Activated naive CD4-positive, alpha-beta T cell treated with anti-CD3 and anti-CD28 coated beads for 36 hours (primary cell): ENCODE measurements at regions of chr12 and their contacts with region 1.

Region 1: GRCh38 chr12:95003213-95003920 is at the start of gene NDUFA12:
- DNase-seq: peak; percentile 97
- H3K4me3 Mint-ChIP-seq: peak within 1 kb of the TSS; percentile 89
- H3K27ac Mint-ChIP-seq: peak within 1 kb of the TSS; percentile 86
- H3K4me1 Mint-ChIP-seq: peaks cover 51% of the 10 kb centered on the region
- H3K27me3 Mint-ChIP-seq: no peaks in the 10 kb centered on the region
- total RNA-seq, gene NDUFA12: 147 to 160 TPM

Region 2: GRCh38 chr12:94459728-94460615 is 543.4 kb before region 1 on chr12 and contains the start of gene CEP83:
- CTCF ChIA-PET with region 1: no interaction called
- intact Hi-C with region 1: loop called (anchors 5 kb)
- DNase-seq: peak; percentile 98
- H3K4me3 Mint-ChIP-seq: peak within 1 kb of the TSS; percentile 97
- H3K27ac Mint-ChIP-seq: peak within 1 kb of the TSS; percentile 91
- H3K4me1 Mint-ChIP-seq: peaks cover 29% of the 10 kb centered on the region
- H3K27me3 Mint-ChIP-seq: peaks cover 5% of the 10 kb centered on the region
- total RNA-seq, gene CEP83: 19.0 to 21.5 TPM

Region 3: DNA sequence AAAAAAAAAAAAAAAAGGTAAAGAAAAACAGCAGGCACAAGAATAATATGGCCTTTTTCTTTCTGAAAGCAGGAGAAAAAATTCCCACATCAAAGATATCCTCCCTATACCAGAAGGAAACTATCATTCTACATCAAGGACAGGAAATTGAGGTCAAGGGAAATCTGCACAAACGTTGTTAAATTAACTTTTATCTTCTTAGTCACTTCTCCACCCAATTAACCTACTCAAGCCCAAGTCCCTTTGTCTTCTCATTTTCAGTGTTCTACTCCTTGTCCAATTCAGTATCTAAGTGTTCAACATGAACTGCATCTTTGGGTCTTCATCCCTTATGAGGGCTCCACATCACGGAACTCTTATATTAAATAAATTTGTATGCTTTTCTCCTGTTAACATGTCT is 15.6 kb before region 1 on chr12:
- CTCF ChIA-PET with region 1: interaction called, 3 read pairs
- intact Hi-C with region 1: loop called (anchors 1 kb)
- DNase-seq: no peak
- H3K4me3 Mint-ChIP-seq: peak overlapping the region; percentile 38
- H3K27ac Mint-ChIP-seq: peak overlapping the region; percentile 84
- H3K4me1 Mint-ChIP-seq: peaks cover 56% of the 10 kb centered on the region
- H3K27me3 Mint-ChIP-seq: no peaks in the 10 kb centered on the region

Region 4: GRCh38 chr12:95102916-95103671 is 99.7 kb after region 1 on chr12:
- CTCF ChIA-PET with region 1: interaction called, 3 read pairs
- intact Hi-C with region 1: loop called (anchors 1 kb)
- DNase-seq: peak; percentile 70
- H3K4me3 Mint-ChIP-seq: no peak overlapping the region
- H3K27ac Mint-ChIP-seq: no peak overlapping the region
- H3K4me1 Mint-ChIP-seq: peaks cover 10% of the 10 kb centered on the region
- H3K27me3 Mint-ChIP-seq: no peaks in the 10 kb centered on the region

Region 5: GRCh38 chr12:95858479-95859343 is 855.3 kb after region 1 on chr12 and contains the start of gene SNRPF:
- CTCF ChIA-PET with region 1: no interaction called
- intact Hi-C with region 1: loop called (anchors 1 kb)
- DNase-seq: peak; percentile 97
- H3K4me3 Mint-ChIP-seq: no peak within 1 kb of the TSS
- H3K27ac Mint-ChIP-seq: no peak within 1 kb of the TSS
- H3K4me1 Mint-ChIP-seq: peaks cover 25% of the 10 kb centered on the region
- H3K27me3 Mint-ChIP-seq: peaks cover 3% of the 10 kb centered on the region
- total RNA-seq, gene SNRPF: 57.4 to 59.9 TPM